Vagina (tissue), 2 donors: ENCODE measurements at regions of chr5 and their contacts with region 1.

Region 1: DNA sequence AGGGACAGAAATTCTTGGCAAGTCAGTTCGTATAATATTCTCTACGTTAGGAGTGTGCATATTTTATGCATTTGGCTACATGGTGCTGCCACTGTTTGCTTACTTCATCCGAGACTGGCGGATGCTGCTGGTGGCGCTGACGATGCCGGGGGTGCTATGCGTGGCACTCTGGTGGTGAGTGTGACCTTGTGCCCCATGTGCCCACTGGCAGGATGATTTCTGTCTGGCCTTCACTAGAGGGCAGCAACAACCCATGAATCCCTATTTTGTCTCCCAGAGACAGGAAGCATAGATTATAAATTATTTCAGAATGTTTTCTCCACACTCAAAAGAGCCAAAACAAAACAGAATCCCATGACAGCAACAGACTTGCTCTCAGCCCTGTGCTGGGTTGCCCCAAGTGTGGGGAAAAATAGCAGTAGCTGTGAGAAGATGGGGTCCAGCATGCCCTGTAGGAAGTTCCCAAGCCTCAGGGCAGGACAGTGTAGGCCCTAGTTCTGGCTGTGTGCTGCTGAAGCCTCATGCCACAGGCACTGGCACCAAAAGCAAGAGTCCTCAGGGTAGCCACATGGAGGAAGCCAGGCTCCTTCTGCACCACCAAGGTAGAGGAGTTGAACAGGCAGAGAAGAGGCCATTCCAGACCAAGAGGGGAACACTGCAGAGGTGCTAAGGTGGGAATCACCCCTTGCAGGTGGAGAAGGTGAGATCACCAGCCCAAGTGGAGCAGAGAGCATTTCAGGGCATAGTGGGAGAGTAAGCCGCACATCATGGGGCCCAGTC is 16.0 kb downstream of the SLC22A5 start:
- DNase-seq: peak in 1 of 2 donors; percentile 88
- H3K4me3 ChIP-seq: no peak overlapping the region
- H3K27ac ChIP-seq: peak overlapping the region; percentile 91
- H3K4me1 ChIP-seq: peaks cover 56% of the 10 kb centered on the region
- H3K27me3 ChIP-seq: no peaks in the 10 kb centered on the region
- CTCF ChIP-seq: peak; percentile 39 to 78 (median 45)
- POLR2A ChIP-seq: no peak

Region 2: GRCh38 chr5:132190161-132190817 is 195.2 kb before region 1 on chr5:
- intact Hi-C with region 1: no loop called
- DNase-seq: peak in 1 of 2 donors; percentile 34
- H3K4me3 ChIP-seq: no peak overlapping the region
- H3K27ac ChIP-seq: no peak overlapping the region
- H3K4me1 ChIP-seq: no peaks in the 10 kb centered on the region
- H3K27me3 ChIP-seq: no peaks in the 10 kb centered on the region
- CTCF ChIP-seq: peak; percentile 23 to 62 (median 39)
- POLR2A ChIP-seq: no peak

Region 3: DNA sequence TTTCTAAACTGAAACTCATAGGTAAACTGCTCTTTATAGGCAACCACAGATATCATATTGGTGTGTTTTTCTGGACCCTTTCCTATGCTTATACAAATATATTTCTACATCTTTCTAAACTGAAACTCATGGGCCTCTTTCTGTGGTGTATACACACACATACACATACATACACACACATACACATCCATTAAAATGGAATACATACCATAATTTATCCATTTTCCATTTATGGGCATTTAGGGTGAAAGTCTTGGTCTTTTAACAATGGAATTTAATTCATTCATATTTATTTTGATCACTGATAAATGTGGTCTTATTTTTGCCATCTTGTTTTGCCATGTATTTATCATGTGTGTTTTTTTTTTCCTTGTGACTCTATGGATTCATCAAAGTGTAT is 28.1 kb after region 1 on chr5:
- intact Hi-C with region 1: loop called (anchors 1 kb)
- DNase-seq: no peak
- H3K4me3 ChIP-seq: no peak overlapping the region
- H3K27ac ChIP-seq: peak overlapping the region; percentile 99
- H3K4me1 ChIP-seq: peaks cover 80% of the 10 kb centered on the region
- H3K27me3 ChIP-seq: no peaks in the 10 kb centered on the region
- CTCF ChIP-seq: no peak
- POLR2A ChIP-seq: no peak

Region 4: GRCh38 chr5:132501961-132502931 is 116.7 kb after region 1 on chr5:
- intact Hi-C with region 1: loop called (anchors 2 kb)
- DNase-seq: peak in 1 of 2 donors; percentile 80
- H3K4me3 ChIP-seq: no peak overlapping the region
- H3K27ac ChIP-seq: peak overlapping the region; percentile 24
- H3K4me1 ChIP-seq: peaks cover 24% of the 10 kb centered on the region
- H3K27me3 ChIP-seq: no peaks in the 10 kb centered on the region
- CTCF ChIP-seq: no peak
- POLR2A ChIP-seq: no peak